ENCODE measurements at regions of chr11 and their contacts with region 1.

Region 1: DNA sequence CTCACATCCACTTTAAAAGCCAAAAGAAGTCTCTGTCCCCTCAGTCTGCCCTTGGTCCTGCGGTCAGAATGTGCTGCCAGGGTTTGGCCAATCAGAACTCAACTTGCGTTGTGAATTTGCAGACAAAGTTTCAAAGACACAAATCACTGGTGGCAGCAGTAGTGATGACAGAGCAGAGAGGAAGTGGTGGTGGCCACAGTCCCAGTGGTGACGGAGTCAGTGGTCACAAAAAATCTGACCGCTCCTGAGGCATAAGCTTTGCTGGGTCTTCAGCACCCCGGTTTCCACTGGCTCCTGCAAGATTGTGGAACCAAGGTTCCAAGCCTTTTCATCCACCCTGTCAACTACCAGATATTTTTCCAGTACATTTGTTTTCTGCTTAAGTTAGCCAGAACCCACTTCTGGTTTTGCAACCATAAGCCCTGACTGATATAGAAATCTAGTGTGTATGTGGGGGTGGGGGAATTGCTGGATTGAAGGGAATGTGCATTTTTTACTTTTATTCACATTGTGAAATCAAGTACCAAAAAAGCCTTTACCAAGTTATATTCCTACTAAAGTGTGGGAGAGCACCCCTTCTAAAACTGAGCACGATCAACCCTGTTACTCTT is 112.3 kb downstream of the TMPRSS5 start:
- DNase-seq: peak; percentile 16
- H3K4me3 Mint-ChIP-seq: no peak overlapping the region
- H3K27ac Mint-ChIP-seq: peak overlapping the region; percentile 73
- H3K4me1 Mint-ChIP-seq: peaks cover 36% of the 10 kb centered on the region
- H3K27me3 Mint-ChIP-seq: peaks cover 22% of the 10 kb centered on the region

Region 2: DNA sequence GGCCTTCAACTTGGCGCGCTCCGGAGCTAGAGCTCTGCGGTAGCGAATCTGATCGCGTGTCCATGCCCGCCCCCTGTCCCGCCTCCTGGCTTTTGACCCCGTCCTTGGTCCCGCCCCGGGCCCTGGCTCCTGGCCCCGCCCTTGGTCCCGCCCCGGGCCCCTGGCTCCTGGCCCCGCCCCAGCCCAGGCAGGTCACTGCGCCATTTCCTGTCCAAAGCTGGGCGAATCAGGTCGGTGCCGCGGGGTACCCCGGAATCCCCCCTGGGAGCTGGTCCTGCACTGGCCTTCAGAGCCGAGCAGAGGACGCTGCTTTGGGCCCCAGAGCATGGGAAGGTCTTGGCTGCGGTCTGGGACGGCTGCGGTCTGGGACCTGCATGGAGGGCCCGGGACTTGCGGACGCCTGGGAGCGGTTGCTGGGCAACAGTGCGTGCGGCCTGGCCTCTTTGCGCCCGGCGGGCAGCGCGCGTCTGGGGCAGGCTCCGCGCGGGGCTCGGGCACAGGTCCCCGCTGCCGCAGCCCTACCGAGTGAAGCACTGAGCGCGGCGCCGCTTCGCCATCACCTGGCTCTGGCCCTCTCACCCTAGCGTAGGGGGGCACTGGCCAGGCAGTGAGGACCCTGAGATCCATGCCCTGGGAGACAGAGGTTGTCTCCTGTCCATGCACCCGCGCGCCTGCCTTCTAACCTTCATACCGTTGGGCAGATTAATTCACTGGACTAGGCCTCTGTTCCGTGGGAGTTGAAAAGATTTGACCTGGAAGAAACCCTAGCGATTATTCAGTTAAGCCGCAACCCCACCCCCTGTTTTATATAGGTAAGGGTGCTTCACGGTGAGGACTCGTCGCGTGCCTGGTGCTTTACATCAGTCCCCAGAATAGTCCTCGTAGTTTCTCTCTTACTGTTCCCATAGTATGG is 279.2 kb before region 1 on chr11 and contains the start of gene TTC12:
- intact Hi-C with region 1: loop called (anchors 5 kb)
- DNase-seq: peak; percentile 89
- H3K4me3 Mint-ChIP-seq: peak within 1 kb of the TSS; percentile 81
- H3K27ac Mint-ChIP-seq: peak within 1 kb of the TSS; percentile 70
- H3K4me1 Mint-ChIP-seq: peaks cover 20% of the 10 kb centered on the region
- H3K27me3 Mint-ChIP-seq: no peaks in the 10 kb centered on the region
- total RNA-seq, gene TTC12: 7.4 and 8.5 TPM in 2 replicates

Region 3: DNA sequence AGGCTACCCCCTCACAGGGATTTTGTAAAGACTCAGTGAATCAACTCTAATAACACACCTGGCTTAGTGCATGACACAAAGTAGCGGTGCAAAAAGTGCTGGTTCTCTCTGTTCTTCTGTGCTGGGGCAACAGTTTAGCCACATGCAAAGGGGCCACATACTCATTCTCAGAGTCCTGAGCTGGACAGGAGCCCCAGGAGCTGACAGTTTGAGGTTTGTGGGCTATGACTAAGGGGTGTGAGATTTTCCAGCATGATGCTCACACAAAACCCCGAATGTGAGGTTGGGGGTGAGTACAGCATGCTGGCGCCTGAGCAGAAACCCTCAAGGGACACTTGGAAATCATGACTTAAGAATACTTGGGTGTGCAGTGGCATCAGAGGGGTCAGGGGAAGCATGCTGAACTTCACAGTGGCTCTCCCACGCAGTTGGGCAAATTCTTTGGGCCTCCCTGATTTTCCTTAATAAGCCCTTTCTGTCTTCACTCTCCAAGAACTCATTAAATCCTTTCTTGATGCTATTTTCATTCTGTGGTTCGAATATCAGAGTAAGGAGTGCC is 81.3 kb after region 1 on chr11:
- intact Hi-C with region 1: loop called (anchors 2 kb)
- DNase-seq: peak; percentile 20
- H3K4me3 Mint-ChIP-seq: no peak overlapping the region
- H3K27ac Mint-ChIP-seq: peak overlapping the region; percentile 3
- H3K4me1 Mint-ChIP-seq: peaks cover 4% of the 10 kb centered on the region
- H3K27me3 Mint-ChIP-seq: no peaks in the 10 kb centered on the region

Region 4: DNA sequence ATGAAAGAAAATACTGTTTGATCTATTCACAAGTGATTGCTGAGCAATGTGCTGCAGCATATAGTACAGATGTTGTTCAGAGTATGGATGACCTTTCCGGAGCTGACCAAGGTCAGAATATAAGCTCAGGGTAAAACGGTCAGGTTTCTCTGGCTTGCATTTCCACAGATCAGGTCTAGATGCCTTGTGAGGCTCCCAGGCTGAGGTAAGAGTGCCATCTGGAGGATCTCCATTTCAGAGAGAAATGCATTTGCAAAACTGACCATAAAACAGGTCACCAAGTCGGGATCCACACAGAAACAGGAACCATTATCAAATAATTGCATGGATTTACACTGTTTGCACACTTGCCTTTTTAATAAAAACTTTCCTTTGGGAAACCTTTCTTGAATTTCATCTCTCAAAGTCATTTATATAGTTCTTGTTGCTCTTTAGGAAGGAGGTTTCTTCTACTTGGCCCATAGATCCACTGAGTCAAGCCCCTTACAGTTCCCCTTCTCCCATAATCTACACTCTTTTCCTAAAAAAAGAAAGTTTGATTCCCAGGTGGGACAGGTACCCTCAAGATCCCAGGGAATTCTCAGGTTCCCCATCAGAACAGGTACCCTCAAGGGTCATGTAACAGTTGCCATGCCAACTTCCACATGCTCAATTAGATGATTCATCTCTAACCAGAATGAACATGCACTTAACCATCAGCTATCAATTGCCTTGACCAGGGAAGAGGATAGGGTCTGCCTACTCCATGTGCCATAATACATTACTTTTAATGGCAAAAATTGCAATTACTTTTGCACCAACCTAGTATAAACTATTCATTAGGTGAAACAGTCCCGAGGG is 137.3 kb after region 1 on chr11:
- intact Hi-C with region 1: loop called (anchors 10 kb)
- DNase-seq: no peak
- H3K4me3 Mint-ChIP-seq: no peak overlapping the region
- H3K27ac Mint-ChIP-seq: no peak overlapping the region
- H3K4me1 Mint-ChIP-seq: peaks cover under 1% of the 10 kb centered on the region
- H3K27me3 Mint-ChIP-seq: no peaks in the 10 kb centered on the region

Region 5: DNA sequence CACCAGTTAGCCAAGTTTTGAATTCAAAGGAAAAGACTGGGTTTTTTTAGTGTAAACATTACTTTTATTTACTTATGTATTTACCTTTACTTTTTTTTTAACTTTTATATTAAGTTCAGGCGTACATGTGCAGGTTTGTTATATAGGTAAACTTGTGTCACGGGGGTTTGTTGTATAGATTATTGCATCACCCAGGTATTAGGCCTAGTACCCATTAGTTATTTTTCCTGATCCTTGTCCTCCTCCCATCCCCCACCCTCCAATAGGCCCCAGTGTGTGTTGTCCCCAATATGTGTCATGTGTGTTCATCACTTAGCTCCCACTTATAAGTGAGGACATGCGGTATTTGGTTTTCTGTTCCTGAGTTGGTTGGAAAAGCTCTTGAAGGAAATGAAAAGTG is 159.1 kb after region 1 on chr11:
- intact Hi-C with region 1: no loop called
- DNase-seq: no peak
- H3K4me3 Mint-ChIP-seq: no peak overlapping the region
- H3K27ac Mint-ChIP-seq: no peak overlapping the region
- H3K4me1 Mint-ChIP-seq: no peaks in the 10 kb centered on the region
- H3K27me3 Mint-ChIP-seq: no peaks in the 10 kb centered on the region

Region 6: DNA sequence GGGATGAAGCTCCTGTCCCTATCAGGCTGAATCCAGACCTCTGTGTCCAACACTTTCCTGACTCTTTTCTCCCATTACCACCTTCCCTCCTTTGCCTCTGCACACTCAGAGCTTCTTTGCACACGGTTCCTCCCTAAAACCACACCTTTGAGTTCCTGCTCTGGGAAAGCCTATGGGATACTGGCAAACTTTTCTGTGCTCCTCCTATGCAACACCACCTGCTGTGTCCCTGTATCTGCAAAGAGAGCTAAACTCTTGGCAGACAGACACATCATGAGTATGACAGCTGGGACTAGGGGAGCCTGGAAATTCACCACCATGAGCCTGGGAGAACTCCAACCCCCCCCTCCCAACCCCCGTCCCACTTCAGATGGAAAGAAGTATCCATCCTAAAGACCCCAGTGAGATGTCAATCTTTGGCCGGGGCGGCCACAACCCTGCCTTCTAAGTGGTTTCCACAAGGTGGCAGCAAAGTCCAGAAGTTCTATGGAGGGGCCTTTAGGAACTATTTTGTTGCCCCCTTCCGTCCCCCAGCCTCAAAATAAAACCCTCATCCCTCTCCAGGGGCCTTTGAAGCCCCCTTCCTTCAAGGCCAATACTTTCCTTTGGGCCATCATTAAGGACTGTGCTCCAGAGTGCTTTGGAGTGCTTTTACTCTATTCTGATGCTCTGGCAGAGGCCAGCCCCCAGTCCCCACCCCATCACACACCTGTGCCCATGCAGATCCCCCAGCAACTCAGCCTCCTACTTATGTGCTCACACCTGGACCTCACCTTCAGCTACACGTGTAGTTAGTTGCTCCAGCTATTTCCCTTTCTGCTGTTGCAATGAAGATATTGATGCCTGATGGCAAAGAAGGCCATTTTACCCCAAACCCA is 400.5 kb after region 1 on chr11:
- intact Hi-C with region 1: no loop called
- DNase-seq: no peak
- H3K4me3 Mint-ChIP-seq: no peak overlapping the region
- H3K27ac Mint-ChIP-seq: no peak overlapping the region
- H3K4me1 Mint-ChIP-seq: no peaks in the 10 kb centered on the region
- H3K27me3 Mint-ChIP-seq: peaks cover 7% of the 10 kb centered on the region